Posterior cingulate gyrus (tissue), 11 donors: ENCODE measurements at regions of chr6 and their contacts with region 1.

Region 1: GRCh38 chr6:111709615-111710398 is 104.1 kb upstream of the TRAF3IP2 start:
- DNase-seq: peak in 9 of 10 donors; percentile 28 to 89 (median 62)

Region 2: DNA sequence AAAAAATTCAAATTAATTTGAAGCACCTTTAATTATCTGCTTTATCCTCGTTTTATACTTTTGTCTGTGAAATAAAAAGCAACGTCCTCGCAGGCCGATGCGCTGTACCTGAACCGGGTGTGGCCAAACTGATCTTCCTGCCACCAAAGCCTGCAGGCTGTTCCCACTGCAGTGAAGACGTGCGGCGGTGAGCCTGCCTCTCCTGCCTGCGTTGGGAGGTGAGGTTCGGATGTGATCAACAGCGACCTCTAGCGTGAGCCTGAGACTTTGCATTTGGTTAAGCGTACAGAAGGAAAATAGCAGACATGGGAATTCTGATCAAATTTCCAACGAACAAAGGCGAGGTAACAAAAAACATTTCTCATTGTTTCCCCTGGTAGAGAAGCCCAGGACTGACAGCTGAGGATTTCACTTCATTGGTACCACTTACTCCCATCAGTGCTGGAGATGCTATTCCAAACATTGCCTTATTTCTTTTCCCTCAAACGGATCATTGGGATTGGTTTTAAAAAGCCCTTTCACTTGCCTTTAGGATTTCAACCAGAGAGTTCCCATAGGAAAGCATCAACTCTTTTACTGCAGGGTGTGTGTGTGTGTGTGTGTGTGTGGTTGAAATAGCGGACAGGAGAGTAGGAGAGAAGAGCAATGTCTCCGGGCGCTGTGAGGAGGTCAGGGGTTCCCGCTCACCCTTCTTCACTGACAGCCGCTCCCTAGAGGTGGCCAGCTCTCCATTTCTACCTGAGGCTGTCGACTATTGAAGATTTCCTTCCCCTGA is 287.5 kb after region 1 on chr6:
- intact Hi-C with region 1: loop called (anchors 1 kb)
- DNase-seq: peak; percentile 71 to 98 (median 80)

Region 3: GRCh38 chr6:112043032-112044007 is 333.5 kb after region 1 on chr6:
- intact Hi-C with region 1: loop called (anchors 1 kb)
- DNase-seq: peak; percentile 83 to 98 (median 94)